ENCODE measurements at regions of chr4 and their contacts with region 1.

Region 1: DNA sequence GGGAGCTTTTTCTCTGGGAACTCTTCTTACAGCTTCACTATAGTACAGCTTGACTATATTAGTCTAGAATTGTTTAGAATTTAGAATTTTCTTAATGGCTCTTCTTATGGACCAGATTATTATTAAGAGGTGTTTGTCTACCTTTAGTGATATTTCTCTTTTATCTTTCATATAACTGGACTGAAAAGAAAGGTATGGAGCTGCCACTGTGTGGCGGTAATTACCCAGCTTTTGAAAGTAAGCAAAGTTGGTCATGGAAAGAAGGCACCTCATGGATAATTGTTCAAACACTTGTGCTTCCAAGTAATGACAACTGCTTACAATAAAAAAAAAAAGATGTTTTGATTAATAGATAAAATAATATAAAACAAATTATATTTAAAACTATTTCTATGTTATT is 1112.5 kb downstream of the TECRL start:
- DNase-seq: peak; percentile 49
- ATAC-seq: peak; percentile 50
- H3K4me3 ChIP-seq: no peak overlapping the region
- H3K27ac ChIP-seq: no peak overlapping the region
- H3K4me1 ChIP-seq: no peaks in the 10 kb centered on the region
- H3K27me3 ChIP-seq: no peaks in the 10 kb centered on the region
- CTCF ChIP-seq: peak; percentile 62

Region 2: GRCh38 chr4:63315651-63316050 is 18.9 kb after region 1 on chr4:
- CTCF ChIA-PET with region 1: no interaction called
- POLR2A ChIA-PET with region 1: no interaction called
- intact Hi-C with region 1: no loop called
- DNase-seq: no peak
- ATAC-seq: no peak
- H3K4me3 ChIP-seq: no peak overlapping the region
- H3K27ac ChIP-seq: no peak overlapping the region
- H3K4me1 ChIP-seq: no peaks in the 10 kb centered on the region
- H3K27me3 ChIP-seq: no peaks in the 10 kb centered on the region
- CTCF ChIP-seq: no peak

Region 3: GRCh38 chr4:63563288-63564014 is 266.7 kb after region 1 on chr4:
- CTCF ChIA-PET with region 1: interaction called, 13 read pairs
- POLR2A ChIA-PET with region 1: no interaction called
- intact Hi-C with region 1: loop called (anchors 1 kb)
- DNase-seq: peak; percentile 45
- ATAC-seq: peak; percentile 84
- H3K4me3 ChIP-seq: no peak overlapping the region
- H3K27ac ChIP-seq: no peak overlapping the region
- H3K4me1 ChIP-seq: no peaks in the 10 kb centered on the region
- H3K27me3 ChIP-seq: no peaks in the 10 kb centered on the region
- CTCF ChIP-seq: peak; percentile 59

Region 4: GRCh38 chr4:63717384-63717783 is 420.6 kb after region 1 on chr4:
- CTCF ChIA-PET with region 1: no interaction called
- POLR2A ChIA-PET with region 1: no interaction called
- intact Hi-C with region 1: loop called (anchors 1 kb)
- DNase-seq: peak; percentile 82
- ATAC-seq: peak; percentile 70
- H3K4me3 ChIP-seq: no peak overlapping the region
- H3K27ac ChIP-seq: no peak overlapping the region
- H3K4me1 ChIP-seq: no peaks in the 10 kb centered on the region
- H3K27me3 ChIP-seq: no peaks in the 10 kb centered on the region
- CTCF ChIP-seq: peak; percentile 85